HEK293 (cell line): ENCODE measurements at regions of chr11 and their contacts with region 1.

Region 1: GRCh38 chr11:2196970-2197770 is 25.6 kb upstream of the TH start:
- H3K4me3 ChIP-seq: no peak overlapping the region
- H3K27ac ChIP-seq: no peak overlapping the region
- H3K4me1 ChIP-seq: no peaks in the 10 kb centered on the region
- CTCF ChIP-seq: peak; percentile 79

Region 2: DNA sequence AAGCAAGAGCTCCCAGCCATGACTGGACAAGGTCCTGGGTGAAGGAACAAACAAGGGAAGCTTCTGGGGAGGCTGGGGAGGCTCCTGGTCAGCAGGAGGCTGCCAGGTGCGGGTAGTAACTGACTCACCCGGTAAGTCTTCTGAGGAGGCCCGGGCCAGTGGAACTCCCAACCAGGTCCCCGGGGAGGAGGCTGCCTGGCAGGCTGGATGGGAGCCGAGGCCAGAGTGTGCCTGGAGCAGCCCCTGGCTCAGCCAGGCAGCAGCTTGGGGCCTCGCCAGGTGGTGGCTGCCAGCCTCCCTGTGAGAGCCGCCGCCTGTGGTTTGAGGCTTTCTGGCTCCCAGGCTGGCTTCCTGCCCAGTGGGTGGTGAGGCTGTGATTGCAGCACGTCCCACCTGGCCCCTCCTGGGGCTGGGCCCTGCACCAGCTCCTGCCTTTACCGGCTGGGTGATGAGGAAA is 104.2 kb before region 1 on chr11:
- CTCF ChIA-PET with region 1: no interaction called
- POLR2A ChIA-PET with region 1: no interaction called
- H3K4me3 ChIP-seq: no peak overlapping the region
- H3K27ac ChIP-seq: no peak overlapping the region
- H3K4me1 ChIP-seq: no peaks in the 10 kb centered on the region
- CTCF ChIP-seq: no peak

Region 3: DNA sequence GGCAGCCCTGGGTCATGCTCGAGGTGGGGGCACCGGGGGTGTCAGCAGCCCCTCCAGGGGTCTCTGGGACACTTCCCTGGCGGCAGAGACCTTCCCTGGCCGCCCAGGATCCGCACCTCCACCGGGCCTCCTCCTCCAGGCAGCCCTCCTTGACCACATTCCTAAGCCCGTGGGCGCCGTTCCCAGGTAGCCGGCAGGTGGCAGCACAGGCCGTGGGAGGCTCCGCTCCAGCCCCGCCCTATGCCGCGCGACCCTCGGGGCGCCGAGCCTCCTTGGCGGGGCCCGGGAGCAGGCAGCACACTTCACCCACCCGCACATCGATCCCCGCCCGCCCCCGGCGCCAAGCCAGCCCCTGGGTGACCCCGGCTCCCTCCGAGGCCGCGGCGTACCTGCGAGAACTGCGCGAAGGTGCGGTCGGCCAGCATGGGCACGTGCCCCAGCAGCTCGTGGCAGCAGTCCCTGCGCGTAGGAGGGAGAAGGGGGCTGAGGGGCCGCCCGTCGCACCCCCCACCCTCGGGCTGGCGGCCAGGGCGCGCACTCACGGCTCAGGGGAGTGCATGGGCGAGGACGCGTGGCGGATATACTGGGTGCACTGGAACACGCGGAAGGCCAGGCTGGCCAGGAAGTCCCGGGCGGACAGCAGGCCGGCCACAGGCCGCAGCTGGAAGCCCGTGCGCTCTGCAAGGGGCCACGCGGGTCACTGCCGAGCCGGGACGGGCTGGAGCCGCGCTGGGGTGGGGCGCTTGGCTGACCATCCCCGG is 30.9 kb before region 1 on chr11:
- CTCF ChIA-PET with region 1: interaction called, 12 read pairs
- POLR2A ChIA-PET with region 1: no interaction called
- H3K4me3 ChIP-seq: no peak overlapping the region
- H3K27ac ChIP-seq: no peak overlapping the region
- H3K4me1 ChIP-seq: no peaks in the 10 kb centered on the region
- CTCF ChIP-seq: peak; percentile 17; the same call in 1 of the 2 replicates

Region 4: GRCh38 chr11:2186669-2187279 is 10.4 kb before region 1 on chr11:
- CTCF ChIA-PET with region 1: interaction called, 10 read pairs
- POLR2A ChIA-PET with region 1: no interaction called
- H3K4me3 ChIP-seq: no peak overlapping the region
- H3K27ac ChIP-seq: no peak overlapping the region
- H3K4me1 ChIP-seq: no peaks in the 10 kb centered on the region
- CTCF ChIP-seq: no peak

Region 5: DNA sequence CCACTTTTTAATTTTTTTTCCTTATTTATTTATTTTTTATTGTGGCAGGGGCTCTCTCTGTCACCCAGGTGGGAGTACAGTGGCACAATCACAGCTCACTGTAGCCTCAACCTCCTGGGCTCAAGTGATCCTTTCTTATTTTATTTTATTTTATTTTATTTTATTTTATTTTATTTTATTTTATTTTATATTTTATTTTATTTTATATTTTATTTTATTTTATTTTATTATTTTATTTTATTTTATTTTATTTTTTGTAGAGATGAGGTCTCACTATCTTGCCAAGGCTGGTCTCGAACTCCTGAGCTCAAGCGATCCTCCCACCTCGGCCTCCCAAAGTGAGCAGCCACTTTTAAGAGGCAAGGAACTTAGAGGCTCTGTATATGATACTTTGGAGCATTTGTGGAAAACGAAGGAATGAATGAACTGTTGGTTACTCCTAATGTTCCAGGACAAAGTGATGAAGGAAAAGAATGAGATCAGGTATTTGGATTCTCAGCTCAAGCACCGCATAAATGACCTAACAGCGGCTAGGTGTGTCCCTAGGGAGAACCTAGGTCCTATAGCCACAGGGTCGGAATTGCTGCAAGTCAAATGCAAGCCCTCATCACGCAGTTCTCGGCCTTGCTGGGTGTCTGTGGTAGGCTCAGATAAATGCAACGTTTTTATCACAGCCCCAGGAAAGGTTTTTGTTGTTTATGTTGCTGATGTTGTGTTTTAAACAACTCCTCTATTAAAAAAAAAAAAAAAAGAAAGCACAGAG is 36.7 kb after region 1 on chr11:
- CTCF ChIA-PET with region 1: no interaction called
- POLR2A ChIA-PET with region 1: no interaction called
- H3K4me3 ChIP-seq: no peak overlapping the region
- H3K27ac ChIP-seq: no peak overlapping the region
- H3K4me1 ChIP-seq: no peaks in the 10 kb centered on the region
- CTCF ChIP-seq: no peak

Region 6: GRCh38 chr11:2305140-2305840 is 108.1 kb after region 1 on chr11:
- CTCF ChIA-PET with region 1: interaction called, 25 read pairs
- POLR2A ChIA-PET with region 1: no interaction called
- H3K4me3 ChIP-seq: no peak overlapping the region
- H3K27ac ChIP-seq: no peak overlapping the region
- H3K4me1 ChIP-seq: no peaks in the 10 kb centered on the region
- CTCF ChIP-seq: peak; percentile 82

Region 7: GRCh38 chr11:2328021-2328420 is 130.9 kb after region 1 on chr11:
- CTCF ChIA-PET with region 1: no interaction called
- POLR2A ChIA-PET with region 1: no interaction called
- H3K4me3 ChIP-seq: no peak overlapping the region
- H3K27ac ChIP-seq: no peak overlapping the region
- H3K4me1 ChIP-seq: no peaks in the 10 kb centered on the region
- CTCF ChIP-seq: no peak